ENCODE measurements at regions of chr18 and their contacts with region 1.

Region 1: GRCh38 chr18:9971313-9971920 is 57.6 kb downstream of the VAPA start:
- DNase-seq: peak; percentile 76
- ATAC-seq: peak; percentile 51
- H3K4me3 Mint-ChIP-seq: no peak overlapping the region
- H3K27ac Mint-ChIP-seq: no peak overlapping the region
- H3K4me1 Mint-ChIP-seq: peaks cover 12% of the 10 kb centered on the region
- H3K27me3 Mint-ChIP-seq: peaks cover 33% of the 10 kb centered on the region

Region 2: GRCh38 chr18:10519999-10520935 is 548.9 kb after region 1 on chr18:
- CTCF ChIA-PET with region 1: interaction called, 37 read pairs
- DNase-seq: peak; percentile 70
- ATAC-seq: peak; percentile 82
- H3K4me3 Mint-ChIP-seq: no peak overlapping the region
- H3K27ac Mint-ChIP-seq: no peak overlapping the region
- H3K4me1 Mint-ChIP-seq: peaks cover 24% of the 10 kb centered on the region
- H3K27me3 Mint-ChIP-seq: peaks cover 55% of the 10 kb centered on the region

Measured in activated CD8-positive, alpha-beta memory T cell treated with anti-CD3 and anti-CD28 coated beads, Interleukin-2, amount 10 ng/mL, durations not matched to agents 7 days and 5 days (primary cell).